ENCODE measurements at regions of chr19 and their contacts with region 1.

Region 1: GRCh38 chr19:2021453-2022140 is 6.1 kb upstream of the BTBD2 start:
- DNase-seq: no peak
- ATAC-seq: no peak
- H3K4me3 Mint-ChIP-seq: no peak overlapping the region
- H3K27ac Mint-ChIP-seq: no peak overlapping the region
- H3K4me1 Mint-ChIP-seq: no peaks in the 10 kb centered on the region
- H3K27me3 Mint-ChIP-seq: peaks cover 17% of the 10 kb centered on the region
- CTCF ChIP-seq: no peak

Region 2: DNA sequence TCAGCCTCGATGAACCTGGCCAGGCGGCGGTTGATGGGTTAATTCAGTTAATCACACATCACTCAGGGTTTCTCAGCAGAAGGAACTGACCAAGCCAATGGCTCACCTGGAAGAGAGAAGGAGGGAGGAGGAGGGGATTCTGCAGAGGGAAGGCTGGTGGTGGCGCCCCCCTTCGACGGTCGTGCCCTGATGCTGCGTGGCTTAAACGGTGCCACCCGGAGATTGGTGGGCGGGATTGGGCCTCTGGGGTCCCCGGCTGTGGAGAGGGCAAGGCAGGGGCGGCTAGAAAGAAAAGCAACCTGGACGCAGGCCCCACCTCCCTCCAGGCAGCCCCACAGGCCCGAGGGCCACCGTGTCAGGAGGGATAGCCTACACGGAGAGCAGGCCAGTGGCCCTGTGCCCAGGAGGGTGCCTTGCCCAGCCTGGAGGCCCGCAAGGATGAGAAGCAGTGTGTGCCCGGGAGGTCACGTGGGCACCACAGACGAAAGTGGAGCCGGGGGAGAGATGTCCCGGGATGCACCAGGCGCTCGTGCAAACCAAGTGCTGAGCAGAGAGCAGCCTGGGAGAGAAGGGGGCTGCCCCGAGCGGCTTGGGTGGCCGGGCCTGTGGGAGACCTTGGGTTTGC is 64.6 kb before region 1 on chr19:
- CTCF ChIA-PET with region 1: no interaction called
- POLR2A ChIA-PET with region 1: no interaction called
- DNase-seq: peak; percentile 64
- ATAC-seq: peak; percentile 57
- H3K4me3 Mint-ChIP-seq: no peak overlapping the region
- H3K27ac Mint-ChIP-seq: peak overlapping the region; percentile 79; the same call in 1 of the 2 replicates
- H3K4me1 Mint-ChIP-seq: peaks cover 4% of the 10 kb centered on the region; the same call in 1 of the 2 replicates
- H3K27me3 Mint-ChIP-seq: no peaks in the 10 kb centered on the region
- CTCF ChIP-seq: no peak

Region 3: GRCh38 chr19:1978346-1978893 is 43.2 kb before region 1 on chr19:
- CTCF ChIA-PET with region 1: no interaction called
- POLR2A ChIA-PET with region 1: no interaction called
- DNase-seq: no peak
- ATAC-seq: no peak
- H3K4me3 Mint-ChIP-seq: no peak overlapping the region
- H3K27ac Mint-ChIP-seq: no peak overlapping the region
- H3K4me1 Mint-ChIP-seq: no peaks in the 10 kb centered on the region
- H3K27me3 Mint-ChIP-seq: no peaks in the 10 kb centered on the region
- CTCF ChIP-seq: no peak

Region 4: DNA sequence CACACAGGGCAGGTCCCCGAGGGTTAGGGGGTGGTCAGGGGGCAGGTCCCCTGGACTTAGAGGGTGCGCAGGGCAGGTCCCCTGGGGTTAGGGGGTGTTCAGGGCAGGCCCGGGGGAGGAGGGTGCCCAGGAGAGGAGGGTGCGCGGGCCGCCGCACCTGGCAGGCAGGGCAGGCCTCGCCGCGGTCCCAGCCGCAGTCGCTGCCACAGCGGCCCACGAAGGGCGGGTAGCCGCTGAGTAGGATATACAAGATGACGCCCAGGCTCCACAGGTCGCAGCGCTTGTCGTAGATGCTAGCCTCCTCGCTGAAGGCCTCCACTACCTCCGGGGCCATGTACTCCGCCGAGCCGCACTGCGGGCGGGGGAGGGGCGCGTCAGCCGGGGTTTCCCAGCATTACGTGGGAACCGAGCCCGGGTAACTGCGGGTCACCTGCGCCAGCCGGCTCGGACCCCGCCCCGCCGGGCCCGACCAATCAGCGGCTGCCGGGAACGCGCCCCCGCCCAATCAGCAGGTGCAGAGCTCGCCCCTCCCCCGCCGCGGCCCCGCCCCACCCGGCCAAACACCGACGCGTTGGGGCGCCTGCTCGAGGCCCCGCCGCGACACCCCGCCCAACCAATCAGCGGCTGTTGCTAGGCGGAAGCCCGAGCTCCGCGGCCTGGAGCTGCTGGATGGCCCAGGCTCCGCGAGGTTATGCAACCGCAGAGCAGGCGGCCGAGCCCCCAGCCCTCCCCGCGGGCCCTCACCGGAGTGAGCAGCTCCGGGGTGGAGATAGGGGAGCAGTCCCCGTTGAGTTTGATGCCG is 20.3 kb after region 1 on chr19:
- CTCF ChIA-PET with region 1: interaction called, 21 read pairs
- POLR2A ChIA-PET with region 1: no interaction called
- DNase-seq: peak; percentile 99
- ATAC-seq: peak; percentile 87
- H3K4me3 Mint-ChIP-seq: peak overlapping the region; percentile 30
- H3K27ac Mint-ChIP-seq: no peak overlapping the region; the same call in 1 of the 2 replicates
- H3K4me1 Mint-ChIP-seq: peaks cover 7% of the 10 kb centered on the region; the same call in 1 of the 2 replicates
- H3K27me3 Mint-ChIP-seq: no peaks in the 10 kb centered on the region
- CTCF ChIP-seq: no peak

Region 5: GRCh38 chr19:2080336-2080988 is 58.9 kb after region 1 on chr19:
- CTCF ChIA-PET with region 1: no interaction called
- POLR2A ChIA-PET with region 1: no interaction called
- DNase-seq: no peak
- ATAC-seq: no peak
- H3K4me3 Mint-ChIP-seq: no peak overlapping the region
- H3K27ac Mint-ChIP-seq: peak overlapping the region; percentile 74
- H3K4me1 Mint-ChIP-seq: peaks cover 4% of the 10 kb centered on the region
- H3K27me3 Mint-ChIP-seq: no peaks in the 10 kb centered on the region
- CTCF ChIP-seq: no peak

Measured in WTC11 (cell line).